Dorsolateral prefrontal cortex (tissue), 120 donors: ENCODE measurements at regions of chr7 and their contacts with region 1.

Region 1: DNA sequence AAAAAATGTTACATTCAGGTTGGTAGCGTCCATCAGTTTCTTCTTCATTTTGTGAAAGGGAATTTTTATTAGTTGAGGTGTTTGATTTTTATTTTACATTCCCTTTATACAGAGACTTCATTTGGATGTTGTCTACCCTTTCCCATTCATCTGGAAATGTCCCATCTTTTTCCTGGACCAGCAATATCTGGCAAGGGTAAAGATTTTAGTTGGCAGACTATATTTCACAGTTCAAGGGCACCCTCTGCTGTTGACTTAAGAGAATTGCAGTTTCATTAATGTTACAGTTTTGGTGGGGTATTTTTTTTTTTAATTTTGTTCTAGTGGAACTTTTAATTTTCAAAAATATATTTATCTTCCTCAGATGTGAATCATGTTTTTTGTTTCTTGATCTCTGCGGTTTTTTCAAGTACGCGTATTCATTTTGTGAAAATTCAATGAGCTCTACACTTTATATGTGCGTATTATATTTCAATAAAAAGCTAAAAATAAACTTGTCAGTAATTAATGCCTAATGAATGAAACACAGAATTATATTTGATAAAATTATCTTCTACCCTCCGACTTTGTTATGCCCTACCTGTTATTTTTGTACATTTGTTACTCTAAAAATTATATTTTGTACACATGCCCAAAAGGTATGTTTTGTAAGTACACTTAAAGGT is 97.9 kb upstream of the KLF14 start:
- DNase-seq: no peak
- H3K4me3 ChIP-seq: no peak overlapping the region
- H3K27ac ChIP-seq: no peak overlapping the region
- H3K27me3 ChIP-seq: no peaks in the 10 kb centered on the region
- CTCF ChIP-seq: peak; percentile 74 to 94 (median 84)

Region 2: GRCh38 chr7:129489491-129489890 is 1342.5 kb before region 1 on chr7:
- intact Hi-C with region 1: no loop called
- DNase-seq: no peak
- H3K4me3 ChIP-seq: no peak overlapping the region
- H3K27ac ChIP-seq: no peak overlapping the region
- H3K27me3 ChIP-seq: no peaks in the 10 kb centered on the region
- CTCF ChIP-seq: no peak

Region 3: GRCh38 chr7:130793855-130794618 is 37.9 kb before region 1 on chr7:
- intact Hi-C with region 1: loop called in 1 of 2 experiments (anchors 5 kb)
- DNase-seq: peak in 4 of 10 donors; percentile 4 to 43 (median 28)
- H3K4me3 ChIP-seq: peak overlapping the region in 43 of 59 donors; percentile 1 to 52 (median 37)
- H3K27ac ChIP-seq: peak overlapping the region in 7 of 59 donors; percentile 13 to 52 (median 26)
- H3K27me3 ChIP-seq: no peaks in the 10 kb centered on the region
- CTCF ChIP-seq: peak in 28 of 56 donors; percentile 12 to 58 (median 32)